CD14-positive monocyte (primary cell): ENCODE measurements at regions of chr4 and their contacts with region 1.

Region 1: DNA sequence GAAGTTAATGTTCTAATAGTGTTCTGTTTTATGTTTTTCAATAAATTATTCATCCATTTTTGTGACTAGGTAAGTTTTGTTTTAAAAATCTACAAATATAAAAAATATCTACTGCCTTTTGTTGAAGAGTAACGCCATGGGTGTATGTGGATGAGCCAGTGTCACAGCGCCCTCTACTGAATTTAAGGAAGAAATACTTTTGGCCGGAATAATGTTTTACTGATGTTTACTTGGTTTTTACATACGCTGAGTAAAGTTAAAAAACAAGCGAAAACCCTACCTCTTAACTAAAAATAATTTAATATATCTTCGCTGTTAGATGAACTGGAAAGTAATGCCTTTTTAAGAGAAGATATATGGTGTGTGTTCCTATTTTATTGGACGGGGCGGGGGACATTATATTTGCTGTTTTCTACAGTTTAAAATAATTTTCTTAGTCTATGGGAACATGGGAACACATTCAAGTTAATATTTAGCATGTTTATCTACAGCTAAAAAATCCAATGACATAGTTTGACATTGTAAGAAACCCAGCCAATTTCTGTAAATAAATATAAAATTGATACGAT is 86.1 kb downstream of the CPE start:
- DNase-seq: peak; percentile 33 to 48 (median 44)
- H3K4me3 ChIP-seq: no peak overlapping the region
- H3K4me3 Mint-ChIP-seq: no peak overlapping the region
- H3K27ac ChIP-seq: no peak overlapping the region
- H3K27ac Mint-ChIP-seq: no peak overlapping the region
- H3K4me1 ChIP-seq: no peaks in the 10 kb centered on the region
- H3K4me1 Mint-ChIP-seq: no peaks in the 10 kb centered on the region
- H3K27me3 ChIP-seq: no peaks in the 10 kb centered on the region
- H3K27me3 Mint-ChIP-seq: no peaks in the 10 kb centered on the region
- CTCF ChIP-seq: peak; percentile 86

Region 2: DNA sequence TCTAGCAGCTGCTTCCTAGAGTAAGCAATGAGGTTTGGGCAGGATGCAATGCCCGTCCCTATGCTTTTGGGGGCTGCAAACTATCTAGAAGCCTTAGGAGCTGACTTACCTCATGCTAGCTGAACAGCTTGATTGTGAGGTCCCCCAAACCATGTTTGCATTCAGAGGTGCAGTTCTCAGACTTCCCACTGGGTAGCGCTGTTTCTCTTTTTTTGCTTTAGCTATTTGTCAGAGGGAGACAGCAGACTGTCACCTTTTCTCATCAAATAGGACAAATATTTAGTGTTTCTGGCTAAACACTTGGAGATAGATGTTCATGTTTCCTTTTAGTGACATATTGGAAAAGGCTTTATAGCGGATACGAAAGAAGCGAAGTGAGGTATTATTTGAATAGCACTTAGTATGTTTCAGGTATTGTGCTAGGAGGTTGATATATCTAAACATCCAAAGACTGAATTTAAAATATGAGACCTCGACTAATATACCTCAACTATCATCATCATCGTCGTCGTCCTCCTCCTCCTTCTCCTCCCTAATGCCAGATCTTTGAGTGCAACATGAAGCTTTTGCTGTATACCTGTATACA is 333.6 kb before region 1 on chr4:
- intact Hi-C with region 1: loop called (anchors 2 kb)
- DNase-seq: peak; percentile 53 to 74 (median 60)
- H3K4me3 ChIP-seq: no peak overlapping the region
- H3K4me3 Mint-ChIP-seq: no peak overlapping the region
- H3K27ac ChIP-seq: no peak overlapping the region
- H3K27ac Mint-ChIP-seq: peak overlapping the region in 5 of 7 donors; percentile 26 to 64 (median 30)
- H3K4me1 ChIP-seq: peaks cover 30 to 40% of the 10 kb centered on the region in 2 donors
- H3K4me1 Mint-ChIP-seq: peaks cover 37% of the 10 kb centered on the region
- H3K27me3 ChIP-seq: no peaks in the 10 kb centered on the region
- H3K27me3 Mint-ChIP-seq: peaks cover 1 to 4% (median 2%) of the 10 kb centered on the region in 3 donors
- CTCF ChIP-seq: peak; percentile 93

Region 3: DNA sequence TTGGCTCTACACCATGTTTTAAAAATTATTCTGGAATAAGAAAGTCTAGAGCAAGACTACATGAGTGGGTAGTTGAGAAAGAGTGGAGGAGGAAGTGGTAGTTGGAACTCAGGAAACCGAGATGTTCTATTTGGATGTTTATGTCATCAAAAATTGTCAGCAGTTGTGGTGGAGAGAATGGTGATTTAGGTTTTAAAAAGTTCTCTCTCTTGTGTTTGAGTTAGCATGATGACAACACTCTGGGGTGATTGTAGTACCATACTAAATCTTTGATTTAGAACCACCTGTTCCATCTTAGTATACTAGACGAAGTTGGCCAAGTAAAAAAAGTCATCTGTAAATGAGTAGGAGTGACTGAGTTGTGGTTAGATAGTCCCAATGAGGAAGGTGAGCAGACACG is 216.8 kb before region 1 on chr4:
- intact Hi-C with region 1: no loop called
- DNase-seq: peak; percentile 18 to 61 (median 44)
- H3K4me3 ChIP-seq: peak overlapping the region in 1 of 3 experiments; percentile 51
- H3K4me3 Mint-ChIP-seq: no peak overlapping the region
- H3K27ac ChIP-seq: peak overlapping the region in 1 of 2 donors; percentile 76
- H3K27ac Mint-ChIP-seq: no peak overlapping the region
- H3K4me1 ChIP-seq: peaks cover 18 to 25% of the 10 kb centered on the region in 2 donors
- H3K4me1 Mint-ChIP-seq: peaks cover 8% of the 10 kb centered on the region
- H3K27me3 ChIP-seq: no peaks in the 10 kb centered on the region
- H3K27me3 Mint-ChIP-seq: no peaks in the 10 kb centered on the region
- CTCF ChIP-seq: no peak